Common myeloid progenitor, CD34-positive (primary cell): ENCODE measurements at regions of chr13 and their contacts with region 1.

Region 1: GRCh38 chr13:24982333-24982999 is 113.5 kb upstream of the PABPC3 start:
- DNase-seq: peak in 1 of 3 donors; percentile 16
- H3K4me3 ChIP-seq: no peak overlapping the region
- H3K27ac ChIP-seq: no peak overlapping the region
- H3K4me1 ChIP-seq: no peaks in the 10 kb centered on the region
- H3K27me3 ChIP-seq: peaks cover 0 to 17% (median 4%) of the 10 kb centered on the region in 5 experiments

Region 2: GRCh38 chr13:24995226-24995804 is 12.8 kb after region 1 on chr13:
- CTCF ChIA-PET with region 1: interaction called, 10 read pairs
- POLR2A ChIA-PET with region 1: no interaction called
- DNase-seq: peak; percentile 85 to 93 (median 91)
- H3K4me3 ChIP-seq: no peak overlapping the region
- H3K27ac ChIP-seq: no peak overlapping the region
- H3K4me1 ChIP-seq: no peaks in the 10 kb centered on the region
- H3K27me3 ChIP-seq: peaks cover 0 to 13% (median 12%) of the 10 kb centered on the region in 5 experiments